Cardiac septum (tissue), 1 donor: ENCODE measurements at regions of chr2 and their contacts with region 1.

Region 1: GRCh38 chr2:157194097-157194688 is 63.3 kb upstream of the GALNT5 start:
- DNase-seq: no peak

Region 2: DNA sequence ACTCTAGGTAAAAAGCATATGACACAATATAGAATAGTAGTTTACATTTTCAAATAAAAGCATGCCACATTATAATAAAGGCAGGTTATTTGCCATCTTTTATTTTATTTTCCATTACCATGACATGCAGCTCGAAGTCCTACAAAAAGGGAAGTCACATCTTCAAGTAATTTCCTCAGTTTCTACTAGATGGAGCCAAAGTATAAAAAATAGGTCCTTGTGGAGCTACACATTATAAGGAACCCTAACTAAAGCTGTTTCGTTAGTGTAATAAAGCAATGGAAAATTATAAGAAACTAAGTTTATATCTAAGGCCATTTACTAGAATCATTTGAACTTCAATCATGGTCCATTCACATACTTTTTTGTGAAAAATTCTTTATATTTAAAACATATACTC is 1821.2 kb before region 1 on chr2:
- intact Hi-C with region 1: loop called (anchors 5 kb)
- DNase-seq: no peak

Region 3: GRCh38 chr2:157087373-157088002 is 106.7 kb before region 1 on chr2:
- intact Hi-C with region 1: no loop called
- DNase-seq: no peak

Region 4: GRCh38 chr2:157302492-157303099 is 108.4 kb after region 1 on chr2:
- intact Hi-C with region 1: no loop called
- DNase-seq: no peak

Region 5: DNA sequence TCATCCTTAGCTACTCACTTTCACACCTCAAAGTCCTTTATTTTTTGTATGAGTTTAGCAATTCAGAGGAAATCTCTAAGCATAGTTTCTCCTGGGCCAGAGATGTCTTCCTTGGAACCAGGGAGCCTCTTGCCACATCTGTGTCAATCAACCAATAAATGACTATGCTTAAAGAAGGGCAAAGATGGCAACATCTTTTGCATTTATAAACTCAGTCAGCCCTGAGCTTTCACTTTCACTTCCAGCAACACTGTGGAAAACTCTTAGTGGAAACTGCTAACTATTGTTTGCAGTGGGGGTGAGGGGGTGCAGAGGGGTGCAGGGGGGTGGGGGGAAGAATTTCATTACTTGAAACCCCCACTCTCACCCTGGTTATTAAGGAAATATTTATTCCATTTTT is 431.1 kb after region 1 on chr2:
- intact Hi-C with region 1: no loop called
- DNase-seq: no peak